ENCODE measurements at regions of chr7 and their contacts with region 1.

Region 1: DNA sequence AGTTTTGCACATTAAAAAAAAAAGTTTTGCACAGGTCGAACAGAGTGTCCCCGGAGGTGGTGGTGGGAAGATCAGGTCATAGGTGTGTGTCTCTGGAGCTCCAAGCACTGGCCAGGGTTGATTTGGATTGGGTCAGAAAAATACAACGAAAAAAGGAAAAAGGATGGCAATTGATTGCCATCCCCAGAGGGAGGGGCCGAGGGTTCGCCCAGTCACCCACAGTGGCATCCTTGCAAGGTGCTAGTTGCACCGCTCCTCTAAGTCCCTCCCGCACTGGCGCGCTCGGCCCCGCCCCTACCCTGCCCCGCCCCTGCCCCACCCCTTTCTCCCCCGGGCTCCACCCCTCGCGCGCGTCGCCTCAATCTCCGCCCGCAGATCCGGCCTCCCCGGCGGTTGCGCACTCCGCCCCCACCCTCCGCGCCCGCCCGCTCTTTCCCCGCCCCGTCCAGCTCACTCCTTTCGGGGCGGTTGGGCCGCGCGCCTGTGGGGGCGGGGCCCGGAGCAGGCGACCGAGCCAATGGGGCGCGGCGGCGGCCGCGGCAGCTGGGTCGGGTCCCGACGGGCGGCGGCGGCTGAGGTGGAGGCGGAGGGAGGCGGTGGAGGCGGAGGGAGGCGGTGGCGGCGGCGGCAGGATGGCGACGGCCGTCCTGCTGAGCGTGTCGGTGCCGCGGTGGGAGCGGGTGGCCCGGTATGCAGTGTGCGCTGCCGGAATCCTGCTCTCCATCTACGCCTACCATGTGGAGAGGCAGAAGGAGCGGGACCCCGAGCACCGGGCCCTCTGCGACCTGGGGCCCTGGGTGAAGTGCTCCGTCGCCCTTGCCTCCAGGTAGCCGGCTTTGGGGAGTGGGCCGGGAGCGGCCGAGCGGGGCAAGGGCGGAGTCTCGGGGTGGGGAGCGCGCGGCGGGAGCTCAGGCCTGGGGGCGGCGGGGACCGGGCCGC is 31.5 kb upstream of the ERV3-1 start:
- DNase-seq: peak; percentile 95 to 97 (median 95)
- ATAC-seq: peak; percentile 93 to 98 (median 96)
- H3K4me3 ChIP-seq: peak overlapping the region; percentile 61 to 98 (median 76)
- H3K27ac ChIP-seq: peak overlapping the region in 11 of 12 donors; percentile 80 to 93 (median 86)
- H3K4me1 ChIP-seq: peaks cover 0 to 32% (median 14%) of the 10 kb centered on the region in 12 donors
- H3K27me3 ChIP-seq: no peaks in the 10 kb centered on the region
- CTCF ChIP-seq: no peak
- POLR2A ChIP-seq: peak in 1 of 2 donors; percentile 57

Region 2: DNA sequence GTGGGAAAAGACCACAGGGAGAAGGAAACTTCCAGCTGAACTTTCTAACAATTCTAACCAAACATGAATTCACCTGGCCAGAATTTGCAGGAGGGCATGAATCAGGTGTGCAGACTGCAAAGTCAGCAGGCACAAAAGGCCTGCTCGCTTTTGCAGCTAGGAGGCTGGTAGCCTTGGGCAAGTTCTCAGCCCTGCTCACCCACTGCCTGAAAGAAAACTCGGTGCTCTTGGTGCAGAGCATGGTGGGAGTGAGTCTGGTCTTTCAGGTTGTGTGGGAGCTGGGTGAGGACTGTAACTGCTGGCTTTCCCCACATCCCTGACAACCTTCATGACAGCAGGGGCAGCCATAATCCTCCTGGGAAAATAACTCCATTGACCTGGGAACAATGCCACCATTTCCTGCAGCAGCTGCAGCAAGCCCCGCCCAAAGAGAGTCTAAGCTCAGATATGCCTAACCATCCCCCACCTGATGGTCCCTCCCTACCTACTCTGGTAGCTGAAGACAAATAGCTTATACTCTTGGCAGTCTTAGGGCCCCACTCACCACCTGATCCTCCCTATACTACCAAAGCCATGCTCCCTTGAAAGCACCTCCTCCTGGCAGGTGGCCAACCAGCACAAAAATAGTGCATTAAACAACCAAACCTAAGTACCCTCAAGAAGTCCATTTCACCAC is 78.8 kb before region 1 on chr7:
- intact Hi-C with region 1: loop called in 1 of 10 experiments (anchors 5 kb)
- DNase-seq: peak in 2 of 5 donors; percentile 11 to 32
- ATAC-seq: peak in 1 of 4 donors; percentile 48
- H3K4me3 ChIP-seq: no peak overlapping the region
- H3K27ac ChIP-seq: no peak overlapping the region
- H3K4me1 ChIP-seq: peaks cover 0 to 8% (median 0%) of the 10 kb centered on the region in 12 donors
- H3K27me3 ChIP-seq: no peaks in the 10 kb centered on the region
- CTCF ChIP-seq: no peak
- POLR2A ChIP-seq: no peak

Region 3: DNA sequence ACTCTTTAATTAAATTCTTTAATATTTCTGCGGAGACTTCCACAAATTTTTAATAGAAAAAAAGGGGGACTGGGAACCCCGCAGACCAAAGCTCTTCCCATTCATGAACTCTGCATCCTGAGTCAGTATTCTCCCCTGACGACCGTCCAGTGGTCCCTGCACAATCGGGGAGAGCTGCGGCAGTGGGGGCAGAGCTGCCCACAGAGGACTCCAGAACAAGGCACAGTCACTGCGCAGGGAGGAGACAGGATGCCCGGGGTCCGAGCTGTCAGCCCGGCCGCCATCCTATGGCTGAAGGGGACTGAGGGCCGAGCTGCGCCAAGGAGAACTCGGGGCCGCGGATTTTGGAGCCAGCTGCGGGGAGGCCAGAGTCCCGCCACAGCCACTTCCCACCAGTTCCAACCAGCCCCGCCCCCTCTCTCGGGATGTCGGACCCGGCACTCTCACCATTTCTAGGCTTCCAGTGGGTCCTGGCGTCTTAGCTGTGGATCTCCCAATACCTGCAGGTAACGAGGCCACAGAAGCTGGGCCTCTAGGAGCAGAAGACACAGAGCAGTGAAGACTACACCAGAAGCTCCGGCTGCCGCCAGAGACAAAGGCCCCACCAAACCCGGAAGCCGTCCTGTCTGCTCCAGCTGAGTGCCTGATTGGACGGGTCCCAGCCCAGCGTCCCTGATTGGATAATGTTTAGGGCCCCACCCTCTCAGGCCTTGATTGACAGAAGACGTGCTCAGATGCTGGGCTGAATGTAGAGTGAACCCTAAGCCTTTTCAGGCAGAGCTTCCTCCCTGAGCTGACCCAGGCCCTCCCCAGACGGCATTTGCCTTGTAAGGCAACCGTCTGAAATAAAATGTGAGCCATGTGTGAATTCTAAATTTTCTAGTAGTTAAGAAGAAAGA is 31.7 kb before region 1 on chr7 and contains the start of gene ERV3-1:
- intact Hi-C with region 1: loop called in 3 of 10 experiments (anchors 2 kb)
- DNase-seq: peak; percentile 96 to 98 (median 97)
- ATAC-seq: peak; percentile 99 to 100 (median 100)
- H3K4me3 ChIP-seq: peak within 1 kb of the TSS; percentile 60 to 90 (median 78)
- H3K27ac ChIP-seq: peak within 1 kb of the TSS; percentile 44 to 93 (median 84)
- H3K4me1 ChIP-seq: peaks cover 0 to 49% (median 23%) of the 10 kb centered on the region in 12 donors
- H3K27me3 ChIP-seq: no peaks in the 10 kb centered on the region
- CTCF ChIP-seq: no peak
- POLR2A ChIP-seq: peak; percentile 87 to 98
- total RNA-seq, gene ERV3-1: 2.8 to 13.0 (median 7.4) TPM